ENCODE measurements at regions of chr10 and their contacts with region 1.

Region 1: DNA sequence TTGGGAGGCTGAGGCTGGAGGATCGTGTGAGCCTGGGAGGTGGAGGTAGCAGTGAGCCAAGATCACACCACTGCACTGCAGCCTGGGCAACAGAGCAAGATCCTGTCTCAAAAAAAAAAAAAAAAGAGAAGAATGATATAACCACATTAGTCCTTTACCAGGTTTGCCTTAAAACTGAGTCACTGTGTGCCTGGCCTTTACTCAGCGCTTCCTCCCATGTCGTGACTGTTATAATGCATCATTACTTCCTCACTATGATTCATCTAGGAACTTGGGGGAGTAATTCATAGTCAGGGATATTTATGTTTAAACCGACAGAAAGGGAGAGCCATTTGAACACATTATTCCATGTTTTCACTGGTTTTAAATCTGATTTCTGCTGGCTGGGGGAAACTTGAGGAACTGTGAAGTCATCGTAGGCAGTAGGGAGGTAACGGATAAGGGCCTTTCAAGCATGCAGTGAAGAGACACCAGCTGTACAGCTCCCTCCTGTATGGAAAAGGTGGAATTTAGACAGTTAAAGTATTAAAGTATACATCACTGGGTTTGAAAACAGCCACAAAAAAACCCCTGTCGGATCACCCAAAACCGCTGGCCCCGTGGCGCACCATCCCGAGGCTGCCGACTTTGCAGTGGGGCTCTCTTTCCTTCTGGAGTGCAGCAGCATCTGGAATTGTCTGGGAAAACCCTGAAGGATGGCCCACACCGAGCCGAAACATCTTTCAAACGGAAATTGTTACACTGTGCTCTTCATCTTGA is 119.8 kb downstream of the NKX6-2 start:
- DNase-seq: peak; percentile 55
- H3K4me3 Mint-ChIP-seq: no peak overlapping the region
- H3K27ac Mint-ChIP-seq: no peak overlapping the region
- H3K4me1 Mint-ChIP-seq: peaks cover 12% of the 10 kb centered on the region
- H3K27me3 Mint-ChIP-seq: no peaks in the 10 kb centered on the region

Region 2: GRCh38 chr10:132616170-132616995 is 49.7 kb before region 1 on chr10:
- CTCF ChIA-PET with region 1: no interaction called
- POLR2A ChIA-PET with region 1: no interaction called
- intact Hi-C with region 1: no loop called
- DNase-seq: peak; percentile 84
- H3K4me3 Mint-ChIP-seq: peak overlapping the region; percentile 25
- H3K27ac Mint-ChIP-seq: peak overlapping the region; percentile 81
- H3K4me1 Mint-ChIP-seq: peaks cover 25% of the 10 kb centered on the region
- H3K27me3 Mint-ChIP-seq: peaks cover 2% of the 10 kb centered on the region

Region 3: GRCh38 chr10:132684164-132684891 is 18.2 kb after region 1 on chr10:
- CTCF ChIA-PET with region 1: no interaction called
- POLR2A ChIA-PET with region 1: no interaction called
- intact Hi-C with region 1: loop called (anchors 2 kb)
- DNase-seq: peak; percentile 69
- H3K4me3 Mint-ChIP-seq: no peak overlapping the region
- H3K27ac Mint-ChIP-seq: peak overlapping the region; percentile 49
- H3K4me1 Mint-ChIP-seq: peaks cover 15% of the 10 kb centered on the region
- H3K27me3 Mint-ChIP-seq: no peaks in the 10 kb centered on the region